K562 (cell line): ENCODE measurements at regions of chr22 and their contacts with region 1.

Region 1: DNA sequence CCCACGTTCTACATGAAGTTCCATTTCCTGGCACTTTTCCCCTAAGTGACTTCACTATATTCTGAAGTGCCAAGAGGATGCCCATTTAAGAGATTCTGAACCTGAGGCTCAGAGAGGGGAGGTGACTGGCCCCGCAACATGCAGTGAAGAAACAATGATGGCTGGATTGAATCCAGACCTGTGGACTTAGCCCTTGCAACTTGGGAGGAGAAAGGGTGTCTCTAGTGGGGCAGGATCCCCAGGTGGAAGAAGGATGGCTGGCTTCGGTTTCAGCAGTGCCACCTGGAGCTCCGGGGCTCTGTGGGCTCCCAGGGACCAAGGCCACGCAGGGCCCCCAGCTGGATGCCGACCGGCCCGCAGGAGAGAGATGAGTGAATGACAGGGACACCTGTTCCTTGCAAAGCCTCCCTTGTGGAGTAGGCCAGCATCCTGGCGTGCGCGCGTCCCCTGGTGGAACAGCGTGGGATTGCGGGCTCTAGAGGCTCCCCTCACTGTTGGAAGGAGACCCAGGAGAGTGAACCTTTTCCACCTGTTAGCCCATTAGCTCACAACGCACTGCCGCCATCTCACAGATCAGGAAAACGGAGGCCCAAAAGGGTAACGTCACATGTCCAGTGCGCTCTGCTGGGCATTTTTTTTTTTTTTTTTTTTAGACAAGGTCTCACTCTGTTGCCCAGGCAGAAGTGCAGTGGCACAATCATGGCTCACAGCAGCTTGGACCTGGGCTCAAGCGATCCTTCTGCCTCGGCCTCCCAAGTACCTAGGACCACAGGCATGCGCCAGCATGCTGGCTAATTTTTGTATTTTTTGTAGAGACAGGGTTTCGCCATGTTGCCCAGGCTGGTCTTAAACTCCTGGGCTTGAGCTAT is 104.7 kb downstream of the KIAA1671 start:
- DNase-seq: peak; percentile 52 to 60 (median 56)
- ATAC-seq: peak; percentile 95
- H3K4me3 ChIP-seq: no peak overlapping the region
- H3K27ac ChIP-seq: no peak overlapping the region
- H3K4me1 ChIP-seq: no peaks in the 10 kb centered on the region
- H3K27me3 ChIP-seq: peaks cover 0 to 6% of the 10 kb centered on the region in 2 experiments; a peak in 1 of 5 replicates
- CTCF ChIP-seq: peak; percentile 78 to 84 (median 84)
- EP300 ChIP-seq: no peak
- POLR2A ChIP-seq: no peak
- RAD21 ChIP-seq: peak; percentile 41 to 65

Region 2: GRCh38 chr22:24938741-24939341 is 118.4 kb before region 1 on chr22:
- CTCF ChIA-PET with region 1: interaction called, 3 read pairs
- POLR2A ChIA-PET with region 1: no interaction called
- in situ Hi-C with region 1: no loop called
- intact Hi-C with region 1: loop called (anchors 5 kb)
- DNase-seq: peak; percentile 26 to 42 (median 38)
- ATAC-seq: peak; percentile 70
- H3K4me3 ChIP-seq: no peak overlapping the region
- H3K27ac ChIP-seq: no peak overlapping the region
- H3K4me1 ChIP-seq: no peaks in the 10 kb centered on the region; a peak in 1 of 5 replicates
- H3K27me3 ChIP-seq: peaks cover 0 to 5% of the 10 kb centered on the region in 2 experiments; a peak in 1 of 5 replicates
- CTCF ChIP-seq: peak; percentile 60 to 64 (median 63)
- EP300 ChIP-seq: no peak
- POLR2A ChIP-seq: no peak
- RAD21 ChIP-seq: peak in 1 of 2 experiments; percentile 63; a peak in 2 of 4 replicates